ENCODE measurements at regions of chr15 and their contacts with region 1.

Region 1: GRCh38 chr15:68820295-68821189 is at the start of gene ANP32A:
- DNase-seq: peak; percentile 91 to 97 (median 96)
- H3K4me3 ChIP-seq: peak within 1 kb of the TSS; percentile 68 to 99 (median 91)
- H3K27ac ChIP-seq: peak within 1 kb of the TSS; percentile 95 to 100 (median 99)
- H3K27me3 ChIP-seq: no peaks in the 10 kb centered on the region
- CTCF ChIP-seq: no peak
- total RNA-seq, gene ANP32A: 83.9 to 167 (median 121) TPM

Region 2: DNA sequence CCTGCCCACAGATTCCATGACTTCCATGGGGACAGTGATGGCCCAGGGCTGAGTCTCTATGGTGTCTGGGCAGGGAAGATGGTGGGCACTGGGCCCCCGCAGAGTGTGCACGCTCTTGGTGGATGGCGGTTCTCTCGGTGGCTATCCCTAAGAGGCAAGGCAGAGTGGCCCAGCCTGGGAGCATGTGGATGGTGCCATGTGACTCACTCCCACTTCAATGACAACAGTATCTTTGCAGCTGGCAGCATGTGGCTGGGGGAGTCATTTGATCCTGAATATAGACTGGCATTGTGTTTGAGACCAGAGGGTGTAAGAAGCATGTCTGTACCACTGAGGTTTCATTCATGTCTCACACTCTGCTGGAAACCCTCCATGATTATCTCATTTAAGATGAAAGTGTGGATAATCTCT is 140.6 kb before region 1 on chr15:
- intact Hi-C with region 1: loop called in 1 of 2 experiments (anchors 5 kb)
- DNase-seq: peak in 9 of 10 donors; percentile 76 to 97 (median 88)
- H3K4me3 ChIP-seq: peak overlapping the region in 2 of 59 donors; percentile 5 to 15
- H3K27ac ChIP-seq: peak overlapping the region; percentile 40 to 98 (median 88)
- H3K27me3 ChIP-seq: no peaks in the 10 kb centered on the region
- CTCF ChIP-seq: peak in 14 of 56 donors; percentile 9 to 37 (median 14)

Region 3: GRCh38 chr15:68775671-68776476 is 44.7 kb before region 1 on chr15:
- intact Hi-C with region 1: loop called (anchors 5 kb)
- DNase-seq: peak in 9 of 10 donors; percentile 50 to 82 (median 74)
- H3K4me3 ChIP-seq: peak overlapping the region in 2 of 59 donors; percentile 10 to 16
- H3K27ac ChIP-seq: peak overlapping the region; percentile 35 to 95 (median 89)
- H3K27me3 ChIP-seq: no peaks in the 10 kb centered on the region
- CTCF ChIP-seq: no peak

Region 4: DNA sequence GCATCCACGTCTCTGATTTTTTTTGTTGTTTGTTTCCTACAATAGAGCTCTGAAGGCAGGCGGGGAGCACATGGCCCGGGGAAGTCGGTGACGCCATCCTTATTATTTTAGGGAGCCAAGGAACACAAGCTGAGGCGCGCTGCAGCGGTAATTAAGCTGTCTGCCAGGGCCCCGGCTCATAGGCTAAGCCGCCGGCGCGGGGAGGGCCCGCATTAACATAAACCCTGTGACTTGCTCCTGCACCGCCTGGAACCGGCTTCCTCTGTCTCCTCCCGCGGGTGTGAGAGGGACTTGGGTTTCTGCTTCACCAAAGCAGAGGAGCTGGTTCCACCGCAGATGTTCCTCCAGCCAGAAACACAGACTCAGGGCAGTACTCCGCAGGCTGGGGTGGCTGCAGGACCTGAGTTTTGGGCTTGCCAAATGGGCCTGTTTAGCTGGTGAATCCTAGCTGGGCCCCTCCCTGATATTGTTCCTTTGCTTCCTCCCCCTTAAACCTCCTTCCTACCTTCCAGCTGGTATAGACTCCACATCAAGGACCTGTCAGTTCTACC is 25.2 kb before region 1 on chr15:
- intact Hi-C with region 1: loop called (anchors 1 to 2 kb)
- DNase-seq: peak; percentile 85 to 96 (median 95)
- H3K4me3 ChIP-seq: peak overlapping the region in 54 of 59 donors; percentile 1 to 59 (median 34)
- H3K27ac ChIP-seq: peak overlapping the region; percentile 63 to 99 (median 96)
- H3K27me3 ChIP-seq: no peaks in the 10 kb centered on the region
- CTCF ChIP-seq: peak in 15 of 56 donors; percentile 3 to 43 (median 15)